ENCODE measurements at regions of chr3 and their contacts with region 1.

Region 1: GRCh38 chr3:4531478-4532025 is 38.4 kb downstream of the ITPR1 start:
- DNase-seq: peak in 1 of 3 donors; percentile 37
- H3K4me3 ChIP-seq: no peak overlapping the region
- H3K4me3 Mint-ChIP-seq: no peak overlapping the region
- H3K27ac ChIP-seq: no peak overlapping the region
- H3K27ac Mint-ChIP-seq: peak overlapping the region in 4 of 7 donors; percentile 22 to 50 (median 32)
- H3K4me1 ChIP-seq: peaks cover 74% of the 10 kb centered on the region in 2 donors
- H3K4me1 Mint-ChIP-seq: peaks cover 83% of the 10 kb centered on the region
- H3K27me3 ChIP-seq: no peaks in the 10 kb centered on the region
- H3K27me3 Mint-ChIP-seq: no peaks in the 10 kb centered on the region
- CTCF ChIP-seq: no peak

Region 2: GRCh38 chr3:4517643-4518311 is 13.8 kb before region 1 on chr3:
- intact Hi-C with region 1: no loop called
- DNase-seq: peak in 2 of 3 donors; percentile 30 to 42
- H3K4me3 ChIP-seq: peak overlapping the region in 1 of 3 experiments; percentile 67
- H3K4me3 Mint-ChIP-seq: no peak overlapping the region
- H3K27ac ChIP-seq: peak overlapping the region; percentile 33 to 93
- H3K27ac Mint-ChIP-seq: peak overlapping the region; percentile 82 to 98 (median 93)
- H3K4me1 ChIP-seq: peaks cover 61 to 63% of the 10 kb centered on the region in 2 donors
- H3K4me1 Mint-ChIP-seq: peaks cover 69% of the 10 kb centered on the region
- H3K27me3 ChIP-seq: no peaks in the 10 kb centered on the region
- H3K27me3 Mint-ChIP-seq: peaks cover 0 to 2% (median 0%) of the 10 kb centered on the region in 3 donors
- CTCF ChIP-seq: no peak

Region 3: DNA sequence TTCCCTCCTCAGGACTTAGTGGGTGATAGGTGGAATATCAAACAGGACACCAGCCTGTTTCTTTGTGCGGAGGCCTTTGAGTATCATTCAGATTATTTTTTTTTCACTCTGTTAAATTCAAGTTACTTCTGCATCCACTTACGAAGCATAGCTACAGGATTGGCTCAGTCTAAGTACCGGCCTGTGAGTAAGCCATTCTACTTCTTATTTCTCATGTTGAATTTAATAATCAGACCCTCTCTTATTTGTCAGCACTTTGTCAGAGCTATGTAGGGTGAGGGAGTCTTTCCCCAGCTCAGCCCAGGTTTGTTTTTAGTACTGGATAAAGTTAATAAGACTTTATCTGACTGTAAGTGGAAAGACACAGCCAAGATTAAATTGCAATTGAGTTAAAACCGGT is 16.2 kb after region 1 on chr3:
- intact Hi-C with region 1: loop called in 1 of 2 experiments (anchors 2 kb)
- DNase-seq: peak in 2 of 3 donors; percentile 54 to 78
- H3K4me3 ChIP-seq: no peak overlapping the region
- H3K4me3 Mint-ChIP-seq: no peak overlapping the region
- H3K27ac ChIP-seq: peak overlapping the region in 1 of 2 donors; percentile 68
- H3K27ac Mint-ChIP-seq: peak overlapping the region in 1 of 7 donors; percentile 91
- H3K4me1 ChIP-seq: peaks cover 38 to 50% of the 10 kb centered on the region in 2 donors
- H3K4me1 Mint-ChIP-seq: peaks cover 29% of the 10 kb centered on the region
- H3K27me3 ChIP-seq: no peaks in the 10 kb centered on the region
- H3K27me3 Mint-ChIP-seq: no peaks in the 10 kb centered on the region
- CTCF ChIP-seq: no peak

Region 4: GRCh38 chr3:4582624-4583023 is 51.1 kb after region 1 on chr3:
- intact Hi-C with region 1: no loop called
- DNase-seq: no peak
- H3K4me3 ChIP-seq: no peak overlapping the region
- H3K4me3 Mint-ChIP-seq: no peak overlapping the region
- H3K27ac ChIP-seq: no peak overlapping the region
- H3K27ac Mint-ChIP-seq: peak overlapping the region in 4 of 7 donors; percentile 10 to 37 (median 22)
- H3K4me1 ChIP-seq: peaks cover 35 to 45% of the 10 kb centered on the region in 2 donors
- H3K4me1 Mint-ChIP-seq: peaks cover 62% of the 10 kb centered on the region
- H3K27me3 ChIP-seq: no peaks in the 10 kb centered on the region
- H3K27me3 Mint-ChIP-seq: no peaks in the 10 kb centered on the region
- CTCF ChIP-seq: no peak

Measured in CD14-positive monocyte (primary cell).